GM10248 (cell line): ENCODE measurements at regions of chr13 and their contacts with region 1.

Region 1: DNA sequence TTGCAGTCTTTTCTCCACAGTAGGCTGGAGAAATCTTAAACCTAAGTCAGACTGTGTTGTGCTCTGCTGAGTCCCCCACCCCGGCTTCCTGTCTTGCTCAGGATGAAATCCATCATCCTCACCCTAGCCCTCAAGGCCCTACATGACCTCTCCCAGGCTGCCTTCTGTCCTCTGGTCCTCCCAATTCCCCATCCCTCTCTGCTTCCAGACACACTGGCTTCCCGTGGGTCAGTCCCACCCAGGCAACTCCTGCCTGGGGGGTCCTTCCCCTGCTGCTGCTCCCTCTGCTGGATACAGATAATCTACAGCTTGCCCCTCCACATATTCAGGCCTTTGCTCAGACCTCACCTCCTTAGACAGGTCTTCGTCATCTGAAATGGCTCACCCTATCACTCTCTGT is 18.4 kb upstream of the CBY2 start:
- DNase-seq: no peak
- CTCF ChIP-seq: no peak

Region 2: DNA sequence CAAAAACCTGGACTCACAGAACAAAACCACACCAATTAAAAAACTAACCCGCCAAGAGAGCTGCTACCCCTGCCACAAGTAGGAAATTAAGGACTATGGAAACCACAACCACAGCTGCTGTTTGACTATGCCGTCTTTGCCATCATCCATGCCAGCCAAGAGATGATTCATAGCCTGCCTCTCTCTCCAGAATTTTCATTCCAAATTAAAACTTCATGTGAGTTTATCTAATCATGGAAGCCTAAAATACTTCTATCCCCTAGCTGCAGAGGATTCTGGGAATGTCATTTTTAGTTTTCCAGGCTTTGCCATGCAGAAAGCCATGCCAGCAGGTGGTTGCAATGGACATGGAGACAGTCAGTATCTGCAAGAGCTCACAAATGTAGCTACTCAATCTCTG is 591.0 kb before region 1 on chr13:
- CTCF ChIA-PET with region 1: no interaction called
- POLR2A ChIA-PET with region 1: no interaction called
- DNase-seq: no peak
- CTCF ChIP-seq: no peak

Region 3: GRCh38 chr13:45564133-45564776 is 119.4 kb before region 1 on chr13:
- CTCF ChIA-PET with region 1: no interaction called
- POLR2A ChIA-PET with region 1: no interaction called
- DNase-seq: no peak
- CTCF ChIP-seq: no peak

Region 4: DNA sequence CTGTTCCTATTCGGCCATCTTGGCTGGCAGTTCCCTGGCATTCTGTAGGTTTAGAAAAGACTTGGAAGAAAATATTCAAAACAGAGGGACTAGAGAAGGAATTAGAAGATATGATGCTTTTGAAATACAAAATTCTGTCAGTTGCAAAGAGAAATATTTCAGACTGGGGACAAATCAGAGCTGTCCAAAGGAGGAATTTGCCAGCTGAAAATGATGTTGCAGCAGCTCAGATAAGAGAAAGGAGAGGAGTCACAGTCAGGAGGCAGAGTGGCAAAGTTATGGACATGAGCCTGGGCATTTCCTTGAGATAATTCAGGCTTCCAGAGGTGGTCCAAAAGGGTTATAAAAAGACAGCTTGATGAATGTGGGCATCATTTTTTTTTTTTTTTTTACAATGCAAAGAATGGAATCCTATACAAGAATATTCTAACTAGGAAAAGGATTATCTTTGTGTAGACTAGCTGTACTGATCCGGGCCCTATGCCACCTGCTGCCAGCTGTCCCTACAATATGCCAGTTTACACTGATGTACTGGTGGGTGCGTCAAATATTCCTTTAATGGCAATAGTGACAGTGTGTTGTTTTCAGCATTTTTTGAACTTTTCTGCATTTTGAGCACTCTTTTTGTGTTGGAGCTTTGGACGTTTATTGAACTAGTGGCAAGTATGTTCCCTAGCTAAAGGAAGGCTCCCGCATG is 13.4 kb before region 1 on chr13:
- CTCF ChIA-PET with region 1: interaction called, 12 read pairs
- POLR2A ChIA-PET with region 1: no interaction called
- DNase-seq: no peak
- CTCF ChIP-seq: no peak

Region 5: DNA sequence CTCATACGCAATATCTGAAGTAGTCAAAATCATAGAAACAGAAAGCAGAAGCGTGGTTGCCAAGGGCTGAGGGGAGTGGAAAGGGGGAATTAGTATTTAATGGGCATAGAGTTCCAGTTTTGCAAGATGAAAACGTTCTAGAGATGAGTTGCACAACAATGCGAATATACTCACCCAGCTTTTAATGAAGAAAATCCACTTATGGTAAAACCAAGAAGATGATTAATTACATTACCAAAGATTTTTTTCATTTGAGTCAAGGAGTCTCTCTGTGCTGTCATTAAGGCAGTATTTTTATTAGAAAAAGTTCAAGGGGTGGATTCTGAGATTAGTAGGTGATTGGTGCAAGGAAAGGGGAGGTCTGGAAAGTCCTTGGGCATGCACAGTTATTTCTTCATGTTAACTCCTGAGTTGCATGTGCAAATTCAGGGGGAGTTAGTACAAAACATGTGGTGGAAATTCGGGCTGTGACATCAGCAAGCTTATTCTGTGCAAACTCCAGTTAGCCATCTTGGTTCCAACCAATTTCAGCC is 11.6 kb after region 1 on chr13:
- CTCF ChIA-PET with region 1: interaction called, 14 read pairs
- POLR2A ChIA-PET with region 1: interaction called, 3 read pairs
- DNase-seq: no peak
- CTCF ChIP-seq: no peak

Region 6: GRCh38 chr13:45700971-45701900 is 17.5 kb after region 1 on chr13:
- CTCF ChIA-PET with region 1: interaction called, 14 read pairs
- POLR2A ChIA-PET with region 1: no interaction called
- DNase-seq: peak; percentile 29
- CTCF ChIP-seq: peak; percentile 59

Region 7: GRCh38 chr13:45742985-45743384 is 59.3 kb after region 1 on chr13:
- CTCF ChIA-PET with region 1: no interaction called
- POLR2A ChIA-PET with region 1: no interaction called
- DNase-seq: no peak
- CTCF ChIP-seq: no peak